HepG2 (cell line): ENCODE measurements at regions of chr6 and their contacts with region 1.

Region 1: DNA sequence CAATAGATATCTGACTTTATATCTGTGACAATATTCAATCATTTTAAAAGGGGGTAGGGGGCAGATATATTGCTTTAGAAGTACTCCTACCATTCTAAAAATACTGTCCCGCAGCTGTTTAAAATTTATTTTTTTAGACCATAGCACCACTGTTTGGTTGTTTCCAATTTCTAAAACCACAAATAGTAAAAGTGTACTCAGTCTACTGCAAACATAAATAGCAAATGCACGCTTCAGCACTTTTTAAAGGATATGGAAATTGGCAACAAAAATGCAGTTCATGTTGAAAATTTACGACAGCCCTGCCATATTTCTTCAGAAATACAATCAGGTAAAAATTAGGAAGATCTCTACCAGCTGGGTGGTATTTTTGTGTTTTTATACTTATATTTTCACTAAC is 132.0 kb upstream of the RUNX2 start:
- DNase-seq: no peak
- ATAC-seq: no peak
- H3K4me3 ChIP-seq: no peak overlapping the region
- H3K27ac ChIP-seq: no peak overlapping the region
- H3K4me1 ChIP-seq: peaks cover 47% of the 10 kb centered on the region
- H3K27me3 ChIP-seq: no peaks in the 10 kb centered on the region
- CTCF ChIP-seq: no peak
- EP300 ChIP-seq: no peak
- POLR2A ChIP-seq: no peak
- RAD21 ChIP-seq: no peak

Region 2: DNA sequence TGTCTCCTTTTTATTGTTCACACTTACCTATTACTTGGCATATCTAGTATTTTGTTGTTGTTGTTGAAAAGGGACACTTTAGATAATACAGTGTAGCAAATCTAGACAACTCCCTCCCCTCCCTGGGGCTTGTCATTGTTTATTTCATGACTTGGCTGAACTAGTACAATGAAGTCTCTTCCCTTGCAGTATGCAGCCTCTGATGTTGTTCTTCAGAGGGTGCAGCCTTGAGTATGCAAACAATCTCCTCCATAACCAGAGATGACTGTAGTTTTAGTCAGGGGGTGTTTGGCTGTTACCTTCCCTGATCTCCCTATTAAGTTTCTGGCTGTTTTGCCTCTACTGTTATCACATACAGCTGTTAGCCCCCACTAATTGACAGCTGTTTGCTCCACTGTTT is 183.4 kb before region 1 on chr6:
- CTCF ChIA-PET with region 1: no interaction called
- POLR2A ChIA-PET with region 1: no interaction called
- in situ Hi-C with region 1: no loop called
- intact Hi-C with region 1: no loop called
- DNase-seq: no peak
- ATAC-seq: no peak
- H3K4me3 ChIP-seq: no peak overlapping the region
- H3K27ac ChIP-seq: no peak overlapping the region
- H3K4me1 ChIP-seq: no peaks in the 10 kb centered on the region
- H3K27me3 ChIP-seq: no peaks in the 10 kb centered on the region
- CTCF ChIP-seq: no peak
- EP300 ChIP-seq: no peak
- POLR2A ChIP-seq: no peak
- RAD21 ChIP-seq: no peak

Region 3: DNA sequence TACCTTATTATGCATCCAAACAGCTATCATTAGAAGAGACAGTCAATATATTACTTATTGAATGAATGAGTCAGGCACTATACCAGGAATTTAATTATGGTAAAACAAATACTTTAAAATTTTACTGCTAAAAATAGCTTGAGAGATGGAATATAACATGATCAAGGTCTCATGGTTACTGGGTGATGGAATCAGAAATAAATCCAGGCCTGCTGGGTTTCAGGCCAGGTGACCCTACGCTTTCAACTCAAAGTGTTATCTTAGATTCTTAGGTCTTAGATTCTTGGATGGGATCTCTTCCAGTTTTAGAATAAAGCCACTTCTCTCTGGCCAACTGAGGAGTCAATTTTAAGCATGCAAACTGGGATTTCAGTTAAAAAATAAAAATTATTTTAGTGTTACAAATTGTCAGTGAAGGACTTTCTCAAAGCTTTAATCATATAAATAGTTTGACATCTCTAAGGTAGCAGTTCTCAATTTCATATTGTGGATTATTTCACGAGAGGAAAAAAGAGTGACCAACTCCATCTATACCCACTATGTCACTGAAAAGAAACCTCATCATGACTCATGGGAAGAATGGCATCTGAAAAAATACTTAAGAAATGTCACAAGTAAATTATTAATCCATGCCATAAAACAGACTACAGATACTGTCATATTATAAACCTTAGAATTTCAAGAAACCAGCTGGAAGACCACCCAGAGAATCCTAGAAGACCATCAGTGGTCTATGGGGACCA is 151.4 kb before region 1 on chr6:
- CTCF ChIA-PET with region 1: no interaction called
- POLR2A ChIA-PET with region 1: no interaction called
- in situ Hi-C with region 1: no loop called
- intact Hi-C with region 1: loop called (anchors 5 kb)
- DNase-seq: no peak
- ATAC-seq: no peak
- H3K4me3 ChIP-seq: no peak overlapping the region
- H3K27ac ChIP-seq: no peak overlapping the region
- H3K4me1 ChIP-seq: peaks cover 33% of the 10 kb centered on the region
- H3K27me3 ChIP-seq: no peaks in the 10 kb centered on the region
- CTCF ChIP-seq: no peak
- EP300 ChIP-seq: no peak
- POLR2A ChIP-seq: no peak
- RAD21 ChIP-seq: no peak